Transverse colon (tissue), 4 donors: ENCODE measurements at regions of chr14 and their contacts with region 1.

Region 1: GRCh38 chr14:44388306-44388705 is 118.8 kb downstream of the FSCB start:
- DNase-seq: no peak
- H3K4me3 ChIP-seq: no peak overlapping the region
- H3K27ac ChIP-seq: no peak overlapping the region
- H3K4me1 ChIP-seq: peaks cover 0 to 4% (median 0%) of the 10 kb centered on the region in 4 donors
- H3K27me3 ChIP-seq: no peaks in the 10 kb centered on the region
- CTCF ChIP-seq: no peak
- EP300 ChIP-seq: no peak
- POLR2A ChIP-seq: no peak

Region 2: DNA sequence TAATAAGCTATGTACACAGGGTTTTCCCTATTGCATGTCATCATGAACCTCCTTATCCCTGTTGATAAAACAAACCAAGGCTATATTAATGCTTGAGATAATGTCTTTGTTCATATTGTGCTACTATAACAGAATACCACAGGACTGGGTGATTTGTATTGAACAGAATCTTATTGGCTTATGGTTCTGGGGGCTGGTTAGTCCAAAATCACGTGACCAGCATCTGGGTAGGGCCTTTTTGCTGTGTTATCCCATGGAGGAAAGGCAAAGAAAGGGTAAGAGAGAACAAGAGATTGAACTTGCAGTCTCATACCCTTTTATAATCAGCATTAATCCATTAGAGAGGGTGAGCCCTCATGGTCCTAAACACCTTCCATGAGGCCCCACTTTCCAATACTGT is 43.0 kb before region 1 on chr14:
- in situ Hi-C with region 1: no loop called
- intact Hi-C with region 1: no loop called
- DNase-seq: no peak
- H3K4me3 ChIP-seq: no peak overlapping the region
- H3K27ac ChIP-seq: no peak overlapping the region
- H3K4me1 ChIP-seq: no peaks in the 10 kb centered on the region
- H3K27me3 ChIP-seq: no peaks in the 10 kb centered on the region
- CTCF ChIP-seq: no peak
- EP300 ChIP-seq: no peak
- POLR2A ChIP-seq: no peak

Region 3: DNA sequence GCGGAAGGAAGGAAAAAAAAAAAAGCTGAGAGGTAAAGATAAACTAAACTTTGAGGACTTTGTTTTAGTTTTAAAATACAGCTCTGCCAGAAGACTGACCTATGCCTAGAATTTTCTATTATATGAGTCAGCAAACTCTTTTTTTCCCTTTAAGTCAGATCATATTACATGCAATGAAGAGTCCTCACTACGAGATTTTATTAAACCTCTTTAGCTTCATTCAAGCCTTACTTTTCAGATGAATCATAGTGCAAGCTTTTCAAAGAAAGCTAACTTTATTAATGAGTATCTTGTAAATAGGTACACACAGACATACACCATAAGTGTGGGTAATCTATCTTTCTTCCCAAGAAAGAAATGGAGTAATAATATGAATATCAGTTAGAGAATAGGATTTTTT is 176.6 kb after region 1 on chr14:
- in situ Hi-C with region 1: no loop called
- intact Hi-C with region 1: no loop called
- DNase-seq: no peak
- H3K4me3 ChIP-seq: no peak overlapping the region
- H3K27ac ChIP-seq: no peak overlapping the region
- H3K4me1 ChIP-seq: no peaks in the 10 kb centered on the region
- H3K27me3 ChIP-seq: no peaks in the 10 kb centered on the region
- CTCF ChIP-seq: no peak
- EP300 ChIP-seq: no peak
- POLR2A ChIP-seq: no peak

Region 4: GRCh38 chr14:44782775-44783238 is 394.5 kb after region 1 on chr14:
- in situ Hi-C with region 1: no loop called
- intact Hi-C with region 1: loop called (anchors 10 kb)
- DNase-seq: no peak
- H3K4me3 ChIP-seq: no peak overlapping the region
- H3K27ac ChIP-seq: no peak overlapping the region
- H3K4me1 ChIP-seq: no peaks in the 10 kb centered on the region
- H3K27me3 ChIP-seq: no peaks in the 10 kb centered on the region
- CTCF ChIP-seq: no peak
- EP300 ChIP-seq: no peak
- POLR2A ChIP-seq: no peak